H1 (cell line): ENCODE measurements at regions of chr11 and their contacts with region 1.

Region 1: DNA sequence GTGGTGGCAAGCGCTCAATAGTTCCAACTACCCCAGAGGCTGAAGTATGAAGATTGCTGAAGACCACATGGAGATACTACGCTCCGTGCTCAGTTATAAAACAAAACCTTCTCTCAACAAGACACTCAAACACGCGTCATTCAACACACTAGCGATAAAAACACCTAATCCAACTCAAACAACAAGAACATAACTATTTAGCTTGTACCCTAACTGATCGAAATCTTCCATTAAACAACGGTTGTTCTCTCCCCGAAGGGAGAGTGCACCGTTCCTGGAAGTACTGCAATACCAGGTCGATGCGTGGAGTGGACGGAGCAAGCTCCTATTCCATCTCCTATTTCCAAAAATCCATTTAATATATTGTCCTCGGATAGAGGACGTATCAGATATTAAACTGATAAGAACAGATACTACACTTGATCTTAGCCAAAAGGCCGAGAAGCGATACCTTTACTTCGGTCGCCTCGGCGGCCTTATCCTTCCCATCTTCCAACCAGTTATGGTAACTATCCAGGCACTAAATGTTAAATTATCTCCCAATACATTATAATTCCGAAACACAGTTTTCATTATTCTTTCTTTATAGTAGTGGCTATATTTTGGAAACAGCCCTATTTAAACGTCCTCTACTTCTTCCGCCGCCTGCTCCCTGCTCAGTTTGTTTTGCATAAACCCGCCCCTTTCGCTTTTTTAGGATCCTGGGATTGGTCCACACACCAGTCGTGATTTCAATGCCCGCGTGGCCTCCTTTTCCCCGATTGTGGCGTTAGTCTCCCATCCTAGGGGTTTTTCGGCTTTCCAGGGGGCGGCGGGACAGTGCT is 2.2 kb upstream of the WDR74 start:
- DNase-seq: peak; percentile 88
- H3K4me3 ChIP-seq: peak overlapping the region; percentile 40 to 90 (median 55)
- H3K27ac ChIP-seq: peak overlapping the region; percentile 95
- H3K4me1 ChIP-seq: peaks cover 0 to 5% (median 1%) of the 10 kb centered on the region in 4 experiments; a peak in 2 of 7 replicates
- H3K27me3 ChIP-seq: no peaks in the 10 kb centered on the region
- CTCF ChIP-seq: no peak
- EP300 ChIP-seq: 0 out of 3 replicates have a peak, but pooled peaks of 1 of the 2 experiments have one; percentile 63
- POLR2A ChIP-seq: peak; percentile 100
- RAD21 ChIP-seq: no peak

Region 2: DNA sequence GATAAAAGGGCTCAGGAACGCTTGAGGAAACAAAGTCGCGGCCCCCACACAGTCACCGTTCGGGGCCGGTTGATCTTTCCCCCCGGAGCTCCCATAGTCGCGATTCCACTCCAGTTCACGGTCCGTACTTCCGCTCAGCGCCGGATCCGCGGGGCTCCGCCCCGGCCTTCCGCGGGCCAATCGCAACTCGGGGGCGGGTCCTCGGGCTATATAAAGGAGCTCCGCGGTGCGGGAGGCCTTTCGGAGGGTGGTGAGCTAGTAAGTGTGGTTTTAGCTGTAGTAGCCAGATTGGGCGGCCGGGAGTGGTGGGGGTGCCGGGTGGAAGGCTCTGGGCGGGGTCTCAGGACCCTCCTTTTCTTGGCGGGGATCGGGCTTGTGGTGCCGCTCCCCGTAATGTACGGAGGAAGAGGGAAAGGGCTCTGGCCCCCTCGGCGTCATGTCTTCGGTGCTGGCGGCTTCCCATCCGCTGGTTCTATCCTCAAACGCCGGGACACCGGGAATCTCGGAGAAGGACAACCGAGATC is 176.4 kb before region 1 on chr11 and contains the starts of genes C11orf98 and CSKMT:
- CTCF ChIA-PET with region 1: no interaction called
- POLR2A ChIA-PET with region 1: interaction called, 25 read pairs
- DNase-seq: peak; percentile 79 to 99
- H3K4me3 ChIP-seq: peak within 1 kb of the TSS; percentile 83 to 98 (median 95)
- H3K27ac ChIP-seq: peak within 1 kb of the TSS; percentile 81
- H3K4me1 ChIP-seq: peaks cover 4 to 11% (median 8%) of the 10 kb centered on the region in 4 experiments
- H3K27me3 ChIP-seq: no peaks in the 10 kb centered on the region
- CTCF ChIP-seq: no peak; a peak in 1 of 4 replicates
- EP300 ChIP-seq: peak in 1 of 2 experiments; percentile 71; a peak in 1 of 3 replicates
- POLR2A ChIP-seq: peak; percentile 100
- RAD21 ChIP-seq: no peak; a peak in 1 of 4 replicates
- total RNA-seq, gene C11orf98: 171 and 173 TPM in 2 replicates
- total RNA-seq, gene CSKMT: 66.1 and 67.8 TPM in 2 replicates

Region 3: GRCh38 chr11:62747475-62748160 is 94.0 kb before region 1 on chr11:
- CTCF ChIA-PET with region 1: no interaction called
- POLR2A ChIA-PET with region 1: interaction called, 49 read pairs
- DNase-seq: no peak
- H3K4me3 ChIP-seq: no peak overlapping the region
- H3K27ac ChIP-seq: no peak overlapping the region
- H3K4me1 ChIP-seq: no peaks in the 10 kb centered on the region
- H3K27me3 ChIP-seq: no peaks in the 10 kb centered on the region
- CTCF ChIP-seq: no peak
- EP300 ChIP-seq: no peak
- POLR2A ChIP-seq: no peak
- RAD21 ChIP-seq: no peak

Region 4: DNA sequence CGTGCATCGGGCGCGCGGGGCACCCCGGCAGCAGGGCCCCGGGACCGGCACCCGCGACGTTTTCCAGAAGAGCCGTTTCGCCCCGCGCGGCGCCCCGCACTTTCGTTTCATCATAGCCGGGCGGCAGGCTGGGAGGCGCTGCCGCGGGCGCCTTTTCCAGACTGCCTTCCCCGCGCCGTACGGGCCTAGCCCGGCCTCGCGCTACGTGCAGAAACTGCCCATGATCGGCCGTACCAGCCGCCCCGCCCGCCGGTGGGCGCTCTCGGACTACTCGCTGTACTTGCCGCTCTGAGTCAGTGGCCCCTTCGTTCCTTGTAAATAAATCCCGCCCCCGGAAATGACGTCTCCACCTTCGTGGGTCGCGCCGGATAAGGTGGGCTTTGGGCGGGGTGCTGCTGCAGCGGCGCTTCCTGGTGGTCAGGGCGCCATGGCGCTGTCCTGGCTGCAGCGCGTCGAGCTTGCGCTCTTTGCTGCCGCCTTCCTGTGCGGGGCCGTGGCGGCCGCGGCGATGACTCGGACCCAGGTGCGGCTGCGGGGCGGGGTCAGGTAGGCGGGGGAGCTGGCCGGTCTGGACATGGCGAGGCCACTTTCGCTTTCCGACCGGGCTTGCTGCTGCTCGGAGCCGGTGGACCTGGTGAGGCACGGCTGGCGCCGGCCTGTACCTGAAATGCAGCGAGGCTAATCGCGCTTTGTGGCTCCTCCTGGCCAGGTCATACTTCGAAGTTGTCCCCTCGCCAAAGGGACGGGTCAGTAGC is 54.4 kb before region 1 on chr11 and contains the start of gene TMEM179B:
- CTCF ChIA-PET with region 1: interaction called, 12 read pairs
- POLR2A ChIA-PET with region 1: interaction called, 144 read pairs
- DNase-seq: peak; percentile 93 to 98
- H3K4me3 ChIP-seq: peak within 1 kb of the TSS; percentile 77 to 97 (median 90)
- H3K27ac ChIP-seq: peak within 1 kb of the TSS; percentile 90
- H3K4me1 ChIP-seq: peaks cover 0 to 6% (median 2%) of the 10 kb centered on the region in 4 experiments; a peak in 4 of 7 replicates
- H3K27me3 ChIP-seq: no peaks in the 10 kb centered on the region
- CTCF ChIP-seq: peak; percentile 49 to 67 (median 64)
- EP300 ChIP-seq: peak in 1 of 2 experiments; percentile 71; a peak in 1 of 3 replicates
- POLR2A ChIP-seq: peak; percentile 92 to 94
- RAD21 ChIP-seq: peak; percentile 44 to 51
- total RNA-seq, gene TMEM179B: 16.3 and 18.6 TPM in 2 replicates

Region 5: DNA sequence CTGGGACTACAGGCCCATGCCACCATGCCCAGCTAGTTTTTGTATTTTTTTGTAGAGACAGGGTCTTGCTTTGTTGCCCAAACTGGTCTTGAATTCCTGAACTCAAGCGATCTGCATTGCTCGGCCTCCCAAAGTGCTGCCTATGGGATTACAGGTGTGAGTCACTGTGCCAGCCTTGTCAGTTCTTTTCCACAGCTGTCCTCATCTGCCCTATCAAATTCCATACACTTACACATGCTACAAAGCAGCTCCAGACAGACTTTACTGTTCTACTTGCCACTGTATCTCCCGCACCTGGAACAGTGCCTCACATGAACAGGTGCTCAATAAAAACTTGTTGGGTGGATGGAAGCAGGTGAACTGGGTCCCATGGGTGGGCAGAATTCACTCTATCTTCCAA is 17.9 kb before region 1 on chr11:
- CTCF ChIA-PET with region 1: interaction called, 3 read pairs
- POLR2A ChIA-PET with region 1: interaction called, 398 read pairs
- DNase-seq: no peak
- H3K4me3 ChIP-seq: no peak overlapping the region
- H3K27ac ChIP-seq: no peak overlapping the region
- H3K4me1 ChIP-seq: no peaks in the 10 kb centered on the region
- H3K27me3 ChIP-seq: no peaks in the 10 kb centered on the region
- CTCF ChIP-seq: no peak
- EP300 ChIP-seq: no peak
- POLR2A ChIP-seq: no peak
- RAD21 ChIP-seq: no peak

Region 6: GRCh38 chr11:62965574-62965973 is 124.0 kb after region 1 on chr11:
- CTCF ChIA-PET with region 1: no interaction called
- POLR2A ChIA-PET with region 1: no interaction called
- DNase-seq: no peak
- H3K4me3 ChIP-seq: no peak overlapping the region
- H3K27ac ChIP-seq: no peak overlapping the region
- H3K4me1 ChIP-seq: no peaks in the 10 kb centered on the region
- H3K27me3 ChIP-seq: no peaks in the 10 kb centered on the region
- CTCF ChIP-seq: no peak
- EP300 ChIP-seq: no peak
- POLR2A ChIP-seq: no peak
- RAD21 ChIP-seq: no peak

Region 7: GRCh38 chr11:63023841-63024648 is 182.5 kb after region 1 on chr11:
- CTCF ChIA-PET with region 1: no interaction called
- POLR2A ChIA-PET with region 1: interaction called, 15 read pairs
- DNase-seq: peak; percentile 29 to 97
- H3K4me3 ChIP-seq: no peak overlapping the region
- H3K27ac ChIP-seq: no peak overlapping the region
- H3K4me1 ChIP-seq: peaks cover 0 to 7% (median 4%) of the 10 kb centered on the region in 4 experiments; a peak in 5 of 7 replicates
- H3K27me3 ChIP-seq: peaks cover 0 to 4% (median 2%) of the 10 kb centered on the region in 4 experiments; a peak in 3 of 7 replicates
- CTCF ChIP-seq: peak; percentile 95 to 98 (median 96)
- EP300 ChIP-seq: no peak
- POLR2A ChIP-seq: no peak
- RAD21 ChIP-seq: peak; percentile 84 to 87